ENCODE measurements at regions of chr1 and their contacts with region 1.

Region 1: GRCh38 chr1:12255918-12256317 is 26.1 kb downstream of the VPS13D start:
- DNase-seq: no peak
- ATAC-seq: no peak
- H3K4me3 ChIP-seq: no peak overlapping the region
- H3K27ac ChIP-seq: no peak overlapping the region
- H3K4me1 ChIP-seq: no peaks in the 10 kb centered on the region
- H3K27me3 ChIP-seq: no peaks in the 10 kb centered on the region
- CTCF ChIP-seq: no peak

Region 2: GRCh38 chr1:12124693-12125421 is 131.1 kb before region 1 on chr1:
- CTCF ChIA-PET with region 1: no interaction called
- POLR2A ChIA-PET with region 1: interaction called, 13 read pairs
- in situ Hi-C with region 1: no loop called
- intact Hi-C with region 1: no loop called
- DNase-seq: peak; percentile 76
- ATAC-seq: peak; percentile 69
- H3K4me3 ChIP-seq: no peak overlapping the region
- H3K27ac ChIP-seq: no peak overlapping the region
- H3K4me1 ChIP-seq: no peaks in the 10 kb centered on the region
- H3K27me3 ChIP-seq: no peaks in the 10 kb centered on the region
- CTCF ChIP-seq: peak; percentile 98

Region 3: DNA sequence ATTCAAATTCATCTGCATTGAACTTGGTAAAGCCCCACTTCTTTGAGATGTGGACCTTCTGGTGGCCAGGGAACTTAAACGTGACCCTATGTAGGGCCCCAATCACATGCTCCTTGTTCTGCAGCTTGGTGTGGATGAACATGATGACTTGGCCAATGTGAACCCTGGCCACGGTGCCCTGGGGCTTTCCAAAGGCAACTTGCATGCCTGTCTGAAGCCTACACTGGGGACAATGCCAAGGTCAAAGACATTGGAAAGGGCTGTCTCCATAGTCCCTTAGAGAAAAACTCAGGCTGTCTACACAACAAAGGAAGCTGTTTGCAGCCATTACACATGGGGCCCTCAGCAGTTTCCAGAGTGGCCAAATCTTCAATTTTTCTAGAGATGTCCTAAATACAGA is 35.0 kb before region 1 on chr1:
- CTCF ChIA-PET with region 1: no interaction called
- POLR2A ChIA-PET with region 1: interaction called, 17 read pairs
- in situ Hi-C with region 1: no loop called
- intact Hi-C with region 1: no loop called
- DNase-seq: no peak
- ATAC-seq: no peak
- H3K4me3 ChIP-seq: no peak overlapping the region
- H3K27ac ChIP-seq: no peak overlapping the region
- H3K4me1 ChIP-seq: no peaks in the 10 kb centered on the region
- H3K27me3 ChIP-seq: no peaks in the 10 kb centered on the region
- CTCF ChIP-seq: no peak

Region 4: DNA sequence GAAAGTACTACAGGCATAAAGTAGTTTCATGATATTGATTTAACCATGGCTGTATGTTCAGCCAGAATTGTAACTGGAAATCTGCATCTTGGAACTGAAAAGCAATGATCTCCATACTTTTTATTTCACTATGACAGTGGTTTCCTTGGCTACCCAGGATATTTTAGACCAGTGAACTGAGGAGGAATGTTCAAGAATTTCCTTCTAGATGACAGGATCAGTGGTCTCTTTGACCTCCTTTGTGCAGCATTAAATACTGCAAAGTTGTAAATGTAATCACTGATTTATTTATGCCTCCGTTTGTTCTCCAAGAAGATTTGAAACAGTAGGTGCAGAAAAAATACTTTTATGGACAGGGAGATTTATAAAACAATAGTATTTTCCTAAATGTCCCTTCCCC is 13.4 kb after region 1 on chr1:
- CTCF ChIA-PET with region 1: interaction called, 14 read pairs
- POLR2A ChIA-PET with region 1: interaction called, 4 read pairs
- in situ Hi-C with region 1: no loop called
- intact Hi-C with region 1: no loop called
- DNase-seq: no peak
- ATAC-seq: no peak
- H3K4me3 ChIP-seq: no peak overlapping the region
- H3K27ac ChIP-seq: no peak overlapping the region
- H3K4me1 ChIP-seq: peaks cover 9% of the 10 kb centered on the region
- H3K27me3 ChIP-seq: no peaks in the 10 kb centered on the region
- CTCF ChIP-seq: no peak

Region 5: GRCh38 chr1:12577020-12577419 is 321.1 kb after region 1 on chr1:
- CTCF ChIA-PET with region 1: interaction called, 11 read pairs
- POLR2A ChIA-PET with region 1: no interaction called
- in situ Hi-C with region 1: no loop called
- intact Hi-C with region 1: no loop called
- DNase-seq: no peak
- ATAC-seq: no peak
- H3K4me3 ChIP-seq: no peak overlapping the region
- H3K27ac ChIP-seq: peak overlapping the region; percentile 29; the same call in 1 of the 2 replicates
- H3K4me1 ChIP-seq: peaks cover 42% of the 10 kb centered on the region
- H3K27me3 ChIP-seq: no peaks in the 10 kb centered on the region
- CTCF ChIP-seq: no peak

Region 6: DNA sequence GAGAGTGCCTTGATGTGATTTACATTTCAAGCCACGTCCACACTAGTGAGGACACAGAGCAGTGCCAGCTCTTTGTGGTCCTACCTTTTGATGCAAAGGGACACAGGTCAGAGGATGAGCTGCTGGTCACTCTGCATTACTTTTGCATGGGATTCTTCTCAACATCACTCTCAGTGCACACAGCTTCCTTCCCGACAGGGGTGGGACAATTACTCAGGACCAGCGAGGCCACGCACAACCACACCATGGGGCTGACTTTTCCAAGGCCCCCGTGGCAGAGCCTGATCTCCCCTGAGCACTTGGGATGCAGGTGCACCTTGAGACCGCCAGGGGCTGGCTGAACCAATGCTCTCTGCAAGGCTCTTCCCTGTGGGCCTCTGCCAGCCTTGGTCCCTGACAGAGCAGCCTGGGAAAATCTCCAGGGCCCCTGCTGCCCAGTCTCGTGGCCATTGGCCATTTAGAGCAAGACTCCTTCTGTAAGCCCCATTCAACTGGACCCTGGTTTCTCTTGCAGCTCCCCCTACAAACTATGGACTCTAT is 504.4 kb after region 1 on chr1:
- CTCF ChIA-PET with region 1: no interaction called
- POLR2A ChIA-PET with region 1: no interaction called
- in situ Hi-C with region 1: no loop called
- intact Hi-C with region 1: no loop called
- DNase-seq: no peak
- ATAC-seq: peak; percentile 75; the same call in 1 of the 2 replicates
- H3K4me3 ChIP-seq: no peak overlapping the region
- H3K27ac ChIP-seq: no peak overlapping the region
- H3K4me1 ChIP-seq: no peaks in the 10 kb centered on the region
- H3K27me3 ChIP-seq: peaks cover 17% of the 10 kb centered on the region; the same call in 1 of the 2 replicates
- CTCF ChIP-seq: peak; percentile 42; the same call in 1 of the 2 replicates

Measured in Panc1 (cell line).